Right ventricle myocardium superior (tissue), 1 donor: ENCODE measurements at regions of chr6 and their contacts with region 1.

Region 1: DNA sequence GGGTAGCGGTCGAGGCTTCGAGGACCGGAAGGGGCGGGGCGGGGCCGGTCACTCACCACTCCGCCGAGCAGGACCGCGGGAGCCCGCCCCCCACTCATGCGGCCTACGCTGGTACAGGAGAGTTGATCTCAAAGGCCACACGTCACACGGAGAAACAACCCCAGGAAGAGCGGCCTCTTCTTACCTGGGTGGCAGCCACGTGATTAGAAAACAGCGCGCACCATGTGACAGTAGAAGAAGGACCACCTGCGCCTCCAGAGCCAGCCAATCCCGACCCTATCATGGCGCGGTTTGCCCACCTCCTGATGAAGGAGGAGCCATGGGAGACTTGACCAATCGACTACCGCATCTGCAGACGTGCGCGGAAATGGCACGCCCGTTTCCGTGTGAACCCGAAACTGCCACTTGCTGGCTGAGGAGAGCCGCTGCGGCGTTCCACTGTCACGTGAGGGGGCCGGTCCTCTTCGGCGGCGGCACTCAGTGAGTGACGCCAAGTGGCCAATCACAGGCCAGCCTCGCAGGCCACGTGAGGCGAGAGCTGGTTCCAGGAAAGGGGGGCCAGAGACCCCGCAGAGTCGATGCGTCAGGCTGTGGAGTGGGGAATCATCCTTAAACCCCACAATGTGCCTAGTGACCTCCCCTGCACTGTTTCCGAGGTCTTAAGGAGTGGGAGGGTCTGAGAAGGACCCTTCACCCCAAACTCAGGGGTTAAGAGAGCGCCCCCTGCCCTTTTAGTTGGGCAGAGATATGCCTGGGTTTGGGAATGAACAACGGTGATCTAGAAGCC is at the start of gene CUTA:
- DNase-seq: peak; percentile 100
- ATAC-seq: peak; percentile 96
- total RNA-seq, gene CUTA: 102 TPM

Region 2: GRCh38 chr6:33299237-33299944 is 118.7 kb before region 1 on chr6:
- intact Hi-C with region 1: loop called (anchors 10 kb)
- DNase-seq: peak; percentile 95
- ATAC-seq: peak; percentile 87